ENCODE measurements at regions of chr11 and their contacts with region 1.

Region 1: DNA sequence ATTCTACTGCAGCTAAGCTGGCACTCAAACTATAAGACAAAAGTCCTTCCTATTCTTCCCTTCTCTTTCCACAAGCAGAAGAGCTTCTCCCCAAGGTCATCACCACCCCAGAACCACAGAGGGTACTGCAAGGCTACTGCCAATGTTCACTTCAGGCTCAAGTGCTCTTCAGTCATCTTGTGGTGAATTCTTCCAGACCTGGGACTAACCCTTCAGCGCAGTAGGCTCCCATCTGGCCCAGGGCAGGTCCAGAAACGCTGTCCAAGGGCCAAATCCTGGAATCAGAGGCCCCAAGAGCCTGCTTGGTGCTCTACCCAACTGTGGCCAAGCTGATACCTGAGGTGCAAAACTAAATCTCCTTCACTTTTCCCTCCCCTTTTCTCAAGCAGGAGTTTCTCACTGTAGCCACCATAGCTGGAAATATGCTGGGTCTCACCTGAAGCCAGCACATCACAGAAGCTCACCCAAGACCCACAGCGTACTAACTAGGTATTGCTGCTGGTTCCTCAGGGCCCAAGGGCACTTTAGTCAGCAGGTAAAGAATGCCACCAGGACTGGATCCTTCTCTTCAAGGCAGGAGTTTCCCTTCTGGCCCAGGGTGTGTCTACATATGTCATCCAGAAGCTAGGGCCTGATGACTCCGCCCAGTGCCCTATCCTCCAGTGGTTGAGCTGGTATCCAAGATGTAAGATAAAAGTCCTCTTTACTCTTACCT is 27.9 kb downstream of the FCHSD2 start:
- DNase-seq: no peak
- ATAC-seq: no peak
- H3K4me3 ChIP-seq: no peak overlapping the region
- H3K4me3 Mint-ChIP-seq: no peak overlapping the region
- H3K27ac ChIP-seq: peak overlapping the region in 1 of 2 donors; percentile 46
- H3K27ac Mint-ChIP-seq: peak overlapping the region; percentile 85
- H3K4me1 ChIP-seq: peaks cover 29 to 44% of the 10 kb centered on the region in 2 donors
- H3K4me1 Mint-ChIP-seq: peaks cover 72% of the 10 kb centered on the region
- H3K27me3 ChIP-seq: no peaks in the 10 kb centered on the region
- H3K27me3 Mint-ChIP-seq: no peaks in the 10 kb centered on the region
- CTCF ChIP-seq: no peak

Region 2: GRCh38 chr11:73087730-73088129 is 26.5 kb before region 1 on chr11:
- CTCF ChIA-PET with region 1: no interaction called
- POLR2A ChIA-PET with region 1: no interaction called
- intact Hi-C with region 1: no loop called
- DNase-seq: peak; percentile 51
- ATAC-seq: peak; percentile 61
- H3K4me3 ChIP-seq: no peak overlapping the region
- H3K4me3 Mint-ChIP-seq: peak overlapping the region; percentile 12
- H3K27ac ChIP-seq: peak overlapping the region; percentile 4 to 78
- H3K27ac Mint-ChIP-seq: peak overlapping the region; percentile 86
- H3K4me1 ChIP-seq: peaks cover 28 to 41% of the 10 kb centered on the region in 2 donors
- H3K4me1 Mint-ChIP-seq: peaks cover 57% of the 10 kb centered on the region
- H3K27me3 ChIP-seq: no peaks in the 10 kb centered on the region
- H3K27me3 Mint-ChIP-seq: no peaks in the 10 kb centered on the region
- CTCF ChIP-seq: no peak

Region 3: DNA sequence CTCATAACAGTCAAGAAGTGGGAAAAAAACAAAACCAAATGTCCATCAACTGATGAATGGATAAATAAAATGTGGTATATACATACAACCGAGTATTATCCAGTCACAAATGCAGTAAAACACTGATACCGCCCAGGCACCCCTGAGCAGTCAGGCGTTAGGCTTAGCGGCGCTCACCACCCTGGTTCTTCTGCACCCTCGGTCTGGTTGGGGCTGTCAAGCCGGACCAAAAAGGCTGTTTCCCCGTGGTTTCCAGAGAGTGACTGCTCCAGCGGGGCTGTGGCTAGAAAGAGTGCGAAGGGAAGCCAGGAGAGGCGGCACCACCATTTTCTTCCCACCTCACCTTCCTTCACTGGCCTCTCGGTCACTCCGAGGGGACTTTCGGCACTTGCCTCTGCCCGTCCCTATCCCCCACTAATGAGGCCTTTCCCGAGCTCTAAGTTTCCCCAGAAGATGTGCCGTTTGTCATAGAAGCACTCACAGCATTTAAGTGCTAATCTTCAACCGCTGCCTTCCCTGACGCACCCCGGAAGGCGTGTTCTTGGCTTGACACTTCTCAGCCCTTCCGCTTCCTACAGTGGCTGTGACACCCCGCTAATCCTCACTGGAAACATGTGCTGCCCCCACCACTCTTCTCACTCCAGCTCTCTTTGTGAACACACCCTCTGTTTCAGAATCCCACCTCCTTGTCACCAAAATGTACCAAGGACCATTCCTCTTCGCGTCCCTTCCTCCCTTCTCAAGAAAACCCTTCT is 14.6 kb before region 1 on chr11:
- CTCF ChIA-PET with region 1: no interaction called
- POLR2A ChIA-PET with region 1: interaction called, 4 read pairs
- intact Hi-C with region 1: loop called (anchors 2 kb)
- DNase-seq: no peak
- ATAC-seq: no peak
- H3K4me3 ChIP-seq: no peak overlapping the region
- H3K4me3 Mint-ChIP-seq: peak overlapping the region; percentile 34
- H3K27ac ChIP-seq: peak overlapping the region in 1 of 2 donors; percentile 78
- H3K27ac Mint-ChIP-seq: peak overlapping the region; percentile 76
- H3K4me1 ChIP-seq: peaks cover 25 to 42% of the 10 kb centered on the region in 2 donors
- H3K4me1 Mint-ChIP-seq: peaks cover 76% of the 10 kb centered on the region
- H3K27me3 ChIP-seq: no peaks in the 10 kb centered on the region
- H3K27me3 Mint-ChIP-seq: no peaks in the 10 kb centered on the region
- CTCF ChIP-seq: no peak